Posterior vena cava (tissue), 2 donors: ENCODE measurements at regions of chr10 and their contacts with region 1.

Region 1: GRCh38 chr10:86769991-86770390 is 13.6 kb downstream of the BMPR1A start:
- DNase-seq: no peak

Region 2: GRCh38 chr10:86795353-86795752 is 25.4 kb after region 1 on chr10:
- intact Hi-C with region 1: loop called in 1 of 2 experiments (anchors 1 kb)
- DNase-seq: no peak

Region 3: GRCh38 chr10:86945361-86946212 is 175.6 kb after region 1 on chr10:
- intact Hi-C with region 1: no loop called
- DNase-seq: no peak

Region 4: GRCh38 chr10:87068281-87068680 is 298.3 kb after region 1 on chr10:
- intact Hi-C with region 1: no loop called
- DNase-seq: no peak